A549 (cell line): ENCODE measurements at regions of chrX and their contacts with region 1.

Region 1: GRCh38 chrX:56764153-56764974 is 35.3 kb downstream of the NBDY start:
- DNase-seq: peak; percentile 43 to 73
- ATAC-seq: peak; percentile 44 to 87; a peak in 4 of 6 replicates
- H3K4me3 ChIP-seq: no peak overlapping the region
- H3K27ac ChIP-seq: peak overlapping the region in 1 of 2 experiments; percentile 60; a peak in 1 of 6 replicates
- H3K4me1 ChIP-seq: 0 out of 3 replicates have a peak, but pooled peaks cover 8% of the 10 kb centered on the region
- CTCF ChIP-seq: peak; percentile 61
- EP300 ChIP-seq: no peak
- POLR2A ChIP-seq: no peak
- RAD21 ChIP-seq: peak; percentile 69 to 71

Region 2: GRCh38 chrX:56978172-56978571 is 213.8 kb after region 1 on chrX:
- CTCF ChIA-PET with region 1: interaction called, 28 read pairs
- POLR2A ChIA-PET with region 1: no interaction called
- DNase-seq: peak; percentile 18 to 46
- ATAC-seq: peak; percentile 82 to 89
- H3K4me3 ChIP-seq: no peak overlapping the region
- H3K27ac ChIP-seq: no peak overlapping the region
- H3K4me1 ChIP-seq: no peaks in the 10 kb centered on the region
- CTCF ChIP-seq: peak; percentile 49
- EP300 ChIP-seq: no peak
- POLR2A ChIP-seq: no peak
- RAD21 ChIP-seq: peak; percentile 64 to 68